ENCODE measurements at regions of chr2 and their contacts with region 1.

Region 1: GRCh38 chr2:127526149-127527000 is at the start of gene IWS1:
- DNase-seq: peak; percentile 92 to 96 (median 93)
- H3K4me3 ChIP-seq: peak within 1 kb of the TSS; percentile 100
- H3K27ac ChIP-seq: peak within 1 kb of the TSS; percentile 45 to 91
- H3K4me1 ChIP-seq: peaks cover 4% of the 10 kb centered on the region
- H3K27me3 ChIP-seq: no peaks in the 10 kb centered on the region
- CTCF ChIP-seq: peak in 2 of 3 donors; percentile 59 to 60
- EP300 ChIP-seq: peak; percentile 77
- POLR2A ChIP-seq: peak; percentile 76
- total RNA-seq, gene IWS1: 13.9 to 29.0 (median 25.8) TPM

Region 2: GRCh38 chr2:127106951-127107621 is 419.3 kb before region 1 on chr2 and contains the start of gene BIN1:
- intact Hi-C with region 1: no loop called
- DNase-seq: peak; percentile 78 to 90 (median 84)
- H3K4me3 ChIP-seq: peak within 1 kb of the TSS; percentile 51
- H3K27ac ChIP-seq: peak within 1 kb of the TSS; percentile 81 to 84
- H3K4me1 ChIP-seq: peaks cover 8% of the 10 kb centered on the region
- H3K27me3 ChIP-seq: no peaks in the 10 kb centered on the region
- CTCF ChIP-seq: no peak
- EP300 ChIP-seq: no peak
- POLR2A ChIP-seq: peak; percentile 34
- total RNA-seq, gene BIN1: 25.2 to 77.3 (median 57.6) TPM

Region 3: DNA sequence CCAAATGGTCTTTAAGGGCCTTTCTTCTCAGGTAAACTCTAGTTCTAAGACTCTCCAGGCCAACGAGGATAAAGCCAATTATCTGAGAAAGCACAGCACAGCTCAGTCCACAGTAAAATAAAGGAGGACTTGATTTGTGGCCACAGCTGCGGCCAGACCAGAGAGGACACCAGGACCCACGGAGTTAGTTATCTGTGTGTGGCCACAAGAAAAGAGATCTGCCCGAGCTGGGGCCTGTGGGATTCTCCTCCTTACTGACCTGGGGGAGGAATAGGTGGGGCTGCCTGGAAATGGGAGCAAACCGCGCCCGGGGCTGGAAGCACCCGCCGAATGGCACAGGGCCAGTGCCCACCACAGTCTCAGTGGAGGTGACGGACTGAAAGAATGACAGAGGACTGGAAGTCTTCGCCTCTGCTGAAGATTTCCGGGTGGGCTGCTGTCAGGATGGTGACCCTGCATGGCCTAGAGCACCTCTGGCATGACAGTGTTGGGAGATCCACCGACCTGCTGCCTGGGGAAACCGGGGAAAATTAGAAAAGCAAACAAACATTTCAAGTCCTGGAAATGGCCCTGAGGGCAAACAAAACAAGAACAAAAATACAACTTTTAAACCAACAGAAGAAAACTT is 94.9 kb before region 1 on chr2:
- intact Hi-C with region 1: no loop called
- DNase-seq: no peak
- H3K4me3 ChIP-seq: no peak overlapping the region
- H3K27ac ChIP-seq: no peak overlapping the region
- H3K4me1 ChIP-seq: no peaks in the 10 kb centered on the region
- H3K27me3 ChIP-seq: no peaks in the 10 kb centered on the region
- CTCF ChIP-seq: no peak
- EP300 ChIP-seq: no peak
- POLR2A ChIP-seq: no peak

Region 4: DNA sequence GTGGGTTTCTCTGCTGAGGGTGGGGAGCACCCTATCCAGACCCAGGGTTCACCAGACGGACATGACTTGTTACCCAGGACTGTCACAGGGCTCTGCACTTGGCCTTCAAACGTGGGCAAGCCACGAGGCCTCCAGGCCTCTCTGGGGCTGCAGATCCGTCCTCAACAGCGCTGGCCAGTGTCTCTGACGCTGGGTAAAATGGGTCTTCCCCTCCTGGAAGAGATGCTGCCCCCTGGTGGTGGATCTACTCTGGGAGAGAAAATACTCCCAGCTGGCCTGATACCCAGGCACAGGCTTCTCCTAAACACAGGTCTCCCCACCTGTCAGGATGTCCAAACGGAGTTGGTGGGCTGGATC is 123.3 kb after region 1 on chr2:
- intact Hi-C with region 1: loop called in 1 of 4 experiments (anchors 10 kb)
- DNase-seq: peak; percentile 37 to 76 (median 69)
- H3K4me3 ChIP-seq: no peak overlapping the region
- H3K27ac ChIP-seq: no peak overlapping the region
- H3K4me1 ChIP-seq: no peaks in the 10 kb centered on the region
- H3K27me3 ChIP-seq: no peaks in the 10 kb centered on the region
- CTCF ChIP-seq: peak in 1 of 3 donors; percentile 16
- EP300 ChIP-seq: no peak
- POLR2A ChIP-seq: no peak

Region 5: DNA sequence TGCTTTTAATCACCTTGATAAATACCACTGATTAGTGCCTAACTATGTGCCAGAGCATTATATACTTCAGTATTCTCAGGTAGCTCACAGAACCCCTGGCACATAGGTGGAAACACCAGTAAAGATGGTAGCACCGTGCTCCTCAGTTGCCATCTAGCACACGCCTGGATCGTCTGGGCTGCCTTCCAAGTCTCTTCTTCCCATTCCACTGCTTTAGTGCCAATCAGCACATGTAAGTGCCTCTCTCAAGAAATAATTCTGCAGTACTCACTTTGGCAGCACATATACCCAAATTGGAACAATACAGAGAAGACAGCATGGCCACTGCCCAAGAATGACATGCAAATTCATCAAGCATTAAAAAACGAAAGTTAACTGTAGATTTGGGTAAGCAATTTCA is 318.6 kb after region 1 on chr2:
- intact Hi-C with region 1: loop called in 1 of 4 experiments (anchors 10 kb)
- DNase-seq: no peak
- H3K4me3 ChIP-seq: no peak overlapping the region
- H3K27ac ChIP-seq: no peak overlapping the region
- H3K4me1 ChIP-seq: no peaks in the 10 kb centered on the region
- H3K27me3 ChIP-seq: no peaks in the 10 kb centered on the region
- CTCF ChIP-seq: no peak
- EP300 ChIP-seq: no peak
- POLR2A ChIP-seq: no peak

Measured in ovary (tissue), 10 donors.